ENCODE measurements at regions of chr1 and their contacts with region 1.

Region 1: DNA sequence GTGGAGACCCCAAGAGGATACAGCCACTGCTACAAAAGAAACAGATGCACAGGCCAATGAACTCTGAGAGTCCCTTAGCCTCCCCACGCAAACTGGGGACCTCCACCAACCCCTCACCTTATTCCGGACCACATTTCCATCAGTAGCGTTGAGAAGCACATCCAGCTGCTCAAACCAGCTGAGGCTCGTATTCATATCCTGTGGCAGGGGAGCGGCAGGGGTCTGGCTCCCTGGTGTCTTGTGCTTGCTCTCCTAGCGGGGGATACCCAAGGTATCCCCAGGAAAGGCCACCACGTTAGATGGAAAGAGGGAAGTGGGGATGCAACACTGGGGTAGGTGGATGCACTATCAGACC is 481 bp downstream of the CCDC163 start:
- DNase-seq: no peak
- ATAC-seq: peak in 1 of 4 experiments; percentile 5
- H3K4me3 ChIP-seq: peak overlapping the region; percentile 82 to 94
- H3K4me3 Mint-ChIP-seq: peak overlapping the region; percentile 91 to 94 (median 93)
- H3K27ac ChIP-seq: peak overlapping the region; percentile 66
- H3K27ac Mint-ChIP-seq: peak overlapping the region; percentile 89 to 90
- H3K4me1 ChIP-seq: peaks cover 6 to 27% of the 10 kb centered on the region in 2 experiments
- H3K4me1 Mint-ChIP-seq: peaks cover 28 to 37% (median 31%) of the 10 kb centered on the region in 3 donors
- H3K27me3 ChIP-seq: no peaks in the 10 kb centered on the region
- H3K27me3 Mint-ChIP-seq: no peaks in the 10 kb centered on the region

Region 2: DNA sequence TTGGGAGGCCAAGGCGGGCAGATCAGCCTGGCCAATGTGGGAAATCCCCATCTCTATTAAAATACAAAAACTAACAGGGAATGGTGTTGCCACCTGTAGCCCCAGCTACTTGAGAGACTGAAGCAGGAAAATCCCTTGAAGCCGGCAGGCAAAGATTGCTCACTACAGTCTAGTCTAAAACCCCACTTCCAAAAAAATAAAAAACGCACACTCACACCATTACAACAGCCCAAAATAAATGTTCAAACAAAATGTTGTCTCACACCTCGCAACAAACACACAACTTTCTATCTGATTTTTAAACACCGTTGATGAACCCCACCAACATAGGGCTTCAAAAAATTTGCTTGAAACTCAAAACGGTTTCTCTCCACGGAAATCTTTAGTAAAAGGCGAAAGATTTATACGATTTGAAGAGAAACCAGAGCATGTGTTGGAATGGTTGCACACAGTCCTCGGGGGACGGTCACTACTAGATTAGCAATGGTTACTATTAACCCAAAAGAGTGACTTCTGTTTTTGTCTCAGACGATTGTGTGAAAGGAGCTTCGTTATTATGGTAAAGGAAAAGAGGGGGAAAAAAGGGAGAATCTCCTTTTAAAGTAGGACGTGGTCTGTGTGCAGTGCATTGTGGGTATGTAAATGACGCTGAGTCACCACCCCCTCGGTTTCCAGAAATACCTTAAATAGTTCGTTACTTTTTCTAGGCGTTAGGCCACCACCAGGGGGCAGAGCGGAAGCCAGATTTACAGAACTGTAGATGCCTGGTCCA is 768.5 kb before region 1 on chr1 and contains the start of gene RNU5D-1:
- CTCF ChIA-PET with region 1: interaction called in 1 of 2 experiments, 11 read pairs
- POLR2A ChIA-PET with region 1: no interaction called
- DNase-seq: peak; percentile 82 to 96 (median 90)
- ATAC-seq: peak; percentile 83 to 85 (median 84)
- H3K4me3 ChIP-seq: peak within 1 kb of the TSS in 1 of 2 donors; percentile 45
- H3K4me3 Mint-ChIP-seq: peak within 1 kb of the TSS; percentile 62 to 80 (median 69)
- H3K27ac ChIP-seq: peak within 1 kb of the TSS; percentile 99
- H3K27ac Mint-ChIP-seq: peak within 1 kb of the TSS; percentile 100
- H3K4me1 ChIP-seq: peaks cover 6 to 25% of the 10 kb centered on the region in 2 experiments
- H3K4me1 Mint-ChIP-seq: peaks cover 26 to 38% (median 29%) of the 10 kb centered on the region in 3 donors
- H3K27me3 ChIP-seq: no peaks in the 10 kb centered on the region
- H3K27me3 Mint-ChIP-seq: no peaks in the 10 kb centered on the region
- total RNA-seq, gene RNU5D-1: 21.4 TPM in 1 of 5 donors, not detected in the others

Region 3: GRCh38 chr1:45550401-45551351 is 51.3 kb after region 1 on chr1 and contains the start of gene AKR1A1:
- CTCF ChIA-PET with region 1: interaction called, 3 to 8 read pairs
- POLR2A ChIA-PET with region 1: interaction called in 1 of 2 experiments, 18 read pairs
- DNase-seq: peak; percentile 72 to 92 (median 83)
- ATAC-seq: peak; percentile 94 to 98 (median 96)
- H3K4me3 ChIP-seq: peak within 1 kb of the TSS; percentile 71 to 90
- H3K4me3 Mint-ChIP-seq: peak within 1 kb of the TSS; percentile 93 to 97 (median 94)
- H3K27ac ChIP-seq: peak within 1 kb of the TSS; percentile 76
- H3K27ac Mint-ChIP-seq: peak within 1 kb of the TSS; percentile 92 to 96
- H3K4me1 ChIP-seq: peaks cover 9 to 25% of the 10 kb centered on the region in 2 experiments
- H3K4me1 Mint-ChIP-seq: peaks cover 20 to 26% (median 22%) of the 10 kb centered on the region in 3 donors
- H3K27me3 ChIP-seq: no peaks in the 10 kb centered on the region
- H3K27me3 Mint-ChIP-seq: no peaks in the 10 kb centered on the region
- total RNA-seq, gene AKR1A1: 48.2 to 105 (median 92.9) TPM

Region 4: DNA sequence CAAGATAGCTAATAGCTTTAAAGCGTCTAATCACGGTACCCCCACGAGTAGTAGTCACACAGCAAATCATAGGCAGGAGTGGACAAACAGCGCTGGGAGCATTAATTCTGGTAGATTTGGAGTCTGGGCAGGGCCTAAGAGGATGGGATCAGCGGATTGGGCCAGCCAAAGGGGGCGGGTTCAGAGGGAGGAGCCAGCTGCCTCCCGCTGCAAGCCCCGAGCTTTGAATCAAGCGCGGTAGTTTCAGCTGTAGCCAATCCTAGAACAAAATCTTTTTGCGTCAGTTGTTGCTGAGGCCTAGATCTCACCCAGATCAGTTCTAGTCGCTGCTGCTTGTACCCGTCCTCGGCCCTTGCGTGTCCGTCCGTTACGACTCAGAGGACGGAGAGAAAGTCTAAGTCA is 83.9 kb after region 1 on chr1:
- CTCF ChIA-PET with region 1: interaction called in 1 of 2 experiments, 12 read pairs
- POLR2A ChIA-PET with region 1: interaction called, 4 to 5 read pairs
- DNase-seq: peak; percentile 83 to 98 (median 94)
- ATAC-seq: peak; percentile 76 to 80 (median 78)
- H3K4me3 ChIP-seq: peak overlapping the region; percentile 73 to 98
- H3K4me3 Mint-ChIP-seq: peak overlapping the region; percentile 98 to 100 (median 99)
- H3K27ac ChIP-seq: peak overlapping the region; percentile 87
- H3K27ac Mint-ChIP-seq: peak overlapping the region; percentile 98 to 99
- H3K4me1 ChIP-seq: peaks cover 18 to 31% of the 10 kb centered on the region in 2 experiments
- H3K4me1 Mint-ChIP-seq: peaks cover 29 to 41% (median 31%) of the 10 kb centered on the region in 3 donors
- H3K27me3 ChIP-seq: no peaks in the 10 kb centered on the region
- H3K27me3 Mint-ChIP-seq: no peaks in the 10 kb centered on the region